ENCODE measurements at regions of chr7 and their contacts with region 1.

Region 1: DNA sequence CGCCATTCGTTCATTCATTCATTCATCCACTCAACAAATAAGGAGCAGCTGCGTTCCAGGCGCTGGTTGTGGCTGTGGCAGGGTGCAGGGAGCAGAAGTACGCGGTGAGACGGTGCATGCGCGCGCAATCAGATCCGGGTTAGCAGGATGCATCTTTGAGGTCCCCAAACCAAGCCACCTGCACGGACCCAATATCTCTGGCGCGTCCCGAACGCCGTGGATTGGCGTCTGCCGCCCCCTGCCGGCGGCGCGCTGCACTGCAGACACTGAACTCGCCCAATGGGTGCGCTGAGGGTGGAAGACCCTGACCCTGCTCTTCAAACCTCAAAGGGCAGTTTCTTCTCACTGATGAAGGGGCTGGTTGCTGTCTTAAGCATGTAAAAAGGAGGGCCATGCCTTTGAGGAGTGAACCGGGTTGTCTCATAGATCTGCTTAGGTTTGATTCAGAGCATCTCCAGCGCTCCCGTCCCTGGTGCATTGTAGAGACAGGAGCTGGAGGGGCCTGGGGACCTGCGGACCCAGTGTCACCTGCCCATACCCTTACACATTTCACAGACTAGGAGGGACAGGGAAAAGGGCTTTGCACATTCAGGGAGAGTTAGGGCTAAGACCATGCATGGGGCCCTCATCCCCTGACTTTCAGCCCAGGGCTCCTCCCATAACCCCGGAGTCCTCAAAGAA is 102.5 kb downstream of the RAMP3 start:
- DNase-seq: peak; percentile 53
- H3K4me3 ChIP-seq: no peak overlapping the region
- H3K27ac ChIP-seq: no peak overlapping the region
- H3K4me1 ChIP-seq: no peaks in the 10 kb centered on the region
- H3K27me3 ChIP-seq: peaks cover 17% of the 10 kb centered on the region

Region 2: GRCh38 chr7:44695381-44696155 is 564.5 kb before region 1 on chr7:
- in situ Hi-C with region 1: no loop called
- DNase-seq: no peak
- H3K4me3 ChIP-seq: no peak overlapping the region
- H3K27ac ChIP-seq: no peak overlapping the region
- H3K4me1 ChIP-seq: peaks cover 10% of the 10 kb centered on the region
- H3K27me3 ChIP-seq: no peaks in the 10 kb centered on the region

Region 3: DNA sequence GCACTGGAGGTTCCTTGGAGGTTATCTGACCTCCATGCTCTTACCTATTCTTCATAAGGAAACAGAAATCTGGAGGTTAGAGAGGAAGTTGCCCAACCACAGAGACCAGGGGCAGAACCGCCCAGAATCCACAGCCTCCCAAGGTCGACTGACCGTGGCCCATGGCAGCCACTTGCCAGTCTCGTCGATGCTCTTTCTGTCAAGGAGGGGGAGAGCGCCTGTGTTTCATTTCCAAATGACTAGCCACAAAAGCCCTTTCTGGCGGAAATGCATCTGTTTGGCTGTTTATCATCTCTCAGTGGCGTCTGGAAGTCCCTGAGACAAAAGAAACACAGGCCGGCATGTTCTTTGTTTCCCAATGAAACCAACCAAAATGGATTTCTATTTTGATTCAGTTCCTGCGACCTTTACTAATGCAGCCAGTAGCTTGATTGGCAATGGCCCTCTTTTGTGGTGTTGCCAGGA is 99.7 kb before region 1 on chr7:
- in situ Hi-C with region 1: loop called (anchors 10 kb)
- DNase-seq: no peak
- H3K4me3 ChIP-seq: no peak overlapping the region
- H3K27ac ChIP-seq: no peak overlapping the region
- H3K4me1 ChIP-seq: no peaks in the 10 kb centered on the region
- H3K27me3 ChIP-seq: peaks cover 26% of the 10 kb centered on the region

Region 4: GRCh38 chr7:45203936-45204445 is 56.1 kb before region 1 on chr7:
- in situ Hi-C with region 1: loop called (anchors 10 kb)
- DNase-seq: peak; percentile 57
- H3K4me3 ChIP-seq: peak overlapping the region; percentile 55
- H3K27ac ChIP-seq: no peak overlapping the region
- H3K4me1 ChIP-seq: peaks cover 19% of the 10 kb centered on the region
- H3K27me3 ChIP-seq: peaks cover 30% of the 10 kb centered on the region

Measured in GM23248 (cell line).